ENCODE measurements at regions of chr7 and their contacts with region 1.

Region 1: DNA sequence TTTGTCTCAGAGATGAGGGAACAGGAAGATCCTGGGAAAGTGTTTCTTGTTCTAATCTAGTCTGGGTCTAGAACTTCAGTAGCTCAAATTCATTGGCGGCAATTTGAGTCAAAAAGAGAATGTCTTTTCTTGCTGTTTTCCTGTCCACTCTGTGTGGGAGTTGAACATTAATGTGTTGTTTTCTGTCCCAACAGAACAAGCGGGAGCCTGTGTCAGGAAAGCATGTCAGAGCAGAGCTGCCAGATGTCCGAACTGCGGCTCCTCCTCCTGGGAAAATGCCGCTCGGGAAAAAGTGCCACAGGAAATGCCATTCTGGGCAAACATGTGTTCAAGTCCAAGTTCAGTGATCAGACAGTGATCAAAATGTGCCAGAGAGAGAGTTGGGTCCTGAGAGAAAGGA is 16.0 kb downstream of the GIMAP8 start:
- DNase-seq: no peak
- ATAC-seq: no peak
- H3K4me3 Mint-ChIP-seq: no peak overlapping the region
- H3K27ac Mint-ChIP-seq: no peak overlapping the region
- H3K4me1 Mint-ChIP-seq: peaks cover 68% of the 10 kb centered on the region
- H3K27me3 Mint-ChIP-seq: no peaks in the 10 kb centered on the region
- CTCF ChIP-seq: no peak

Region 2: DNA sequence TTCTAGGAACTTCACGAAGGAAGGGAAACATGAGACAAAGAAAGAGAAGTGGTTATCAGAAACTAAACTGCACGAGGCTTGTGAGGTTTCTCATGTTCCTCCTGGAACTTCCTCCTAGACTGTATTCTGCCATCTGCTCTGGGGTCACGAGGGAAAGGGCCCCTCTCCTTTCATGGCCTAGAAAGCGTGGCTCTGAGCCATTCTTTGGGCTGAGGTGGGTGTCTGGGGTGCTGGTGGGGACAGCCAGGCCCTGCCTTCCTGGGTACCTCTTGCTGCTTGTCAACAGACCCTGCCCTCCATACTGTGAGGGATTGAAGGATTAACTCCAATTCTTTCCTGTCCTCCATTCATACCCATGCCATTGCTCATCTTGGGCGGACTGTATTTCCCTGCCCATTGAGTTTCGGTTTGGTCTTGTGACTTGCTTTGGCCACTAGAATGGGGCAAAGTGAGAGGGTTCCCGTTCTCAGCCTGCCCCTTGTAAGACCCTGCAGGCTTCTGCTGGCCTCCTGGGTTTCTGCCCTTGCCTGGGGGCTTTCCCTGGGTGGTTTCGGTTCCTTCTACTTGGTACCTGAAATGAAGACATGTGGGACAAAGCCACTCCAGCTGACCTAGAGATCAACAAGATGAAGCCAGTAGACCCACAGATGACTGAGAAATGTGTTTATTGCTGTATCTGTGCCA is 30.9 kb before region 1 on chr7:
- CTCF ChIA-PET with region 1: no interaction called
- POLR2A ChIA-PET with region 1: no interaction called
- intact Hi-C with region 1: no loop called
- DNase-seq: no peak
- ATAC-seq: no peak
- H3K4me3 Mint-ChIP-seq: no peak overlapping the region
- H3K27ac Mint-ChIP-seq: no peak overlapping the region
- H3K4me1 Mint-ChIP-seq: peaks cover 38% of the 10 kb centered on the region
- H3K27me3 Mint-ChIP-seq: peaks cover 2% of the 10 kb centered on the region
- CTCF ChIP-seq: no peak

Region 3: GRCh38 chr7:150481186-150481920 is 14.9 kb after region 1 on chr7:
- CTCF ChIA-PET with region 1: interaction called, 9 read pairs
- POLR2A ChIA-PET with region 1: interaction called, 10 read pairs
- intact Hi-C with region 1: loop called (anchors 2 kb)
- DNase-seq: peak; percentile 74
- ATAC-seq: peak; percentile 74
- H3K4me3 Mint-ChIP-seq: peak overlapping the region; percentile 67
- H3K27ac Mint-ChIP-seq: peak overlapping the region; percentile 97
- H3K4me1 Mint-ChIP-seq: peaks cover 92% of the 10 kb centered on the region
- H3K27me3 Mint-ChIP-seq: no peaks in the 10 kb centered on the region
- CTCF ChIP-seq: no peak

Measured in activated CD8-positive, alpha-beta T cell treated with anti-CD3 and anti-CD28 coated beads for 36 hours (primary cell).